GM12878 (cell line): ENCODE measurements at regions of chr12 and their contacts with region 1.

Region 1: GRCh38 chr12:92516277-92516600 is 186.6 kb upstream of the PLEKHG7 start:
- DNase-seq: no peak
- ATAC-seq: peak; percentile 85
- H3K4me3 ChIP-seq: no peak overlapping the region
- H3K27ac ChIP-seq: no peak overlapping the region
- H3K4me1 ChIP-seq: no peaks in the 10 kb centered on the region
- H3K27me3 ChIP-seq: no peaks in the 10 kb centered on the region
- CTCF ChIP-seq: no peak
- EP300 ChIP-seq: no peak
- POLR2A ChIP-seq: no peak
- RAD21 ChIP-seq: no peak

Region 2: DNA sequence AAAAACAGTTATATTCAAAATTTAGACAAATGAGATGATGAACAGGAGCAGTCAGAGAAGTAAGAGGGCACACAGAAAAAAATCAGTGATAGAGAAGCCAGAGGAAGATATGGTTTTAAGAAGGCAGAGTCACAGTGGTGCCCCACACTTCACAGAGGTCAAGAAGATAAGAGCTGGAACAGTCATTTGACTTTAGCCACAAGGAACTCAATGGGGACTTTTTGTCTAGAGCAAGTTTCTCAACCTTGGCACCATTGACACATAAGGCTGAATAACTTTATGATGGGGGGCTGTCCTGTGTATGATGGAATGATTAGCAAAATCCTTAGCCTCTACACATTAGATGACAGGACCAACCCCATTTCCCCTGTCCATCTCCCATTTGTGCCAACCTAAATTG is 13.7 kb after region 1 on chr12:
- CTCF ChIA-PET with region 1: interaction called, 18 read pairs
- POLR2A ChIA-PET with region 1: interaction called, 12 read pairs
- RAD21 ChIA-PET with region 1: interaction called, 4 read pairs
- SMC1A ChIA-PET with region 1: interaction called, 21 read pairs
- in situ Hi-C with region 1: no loop called
- intact Hi-C with region 1: no loop called
- DNase-seq: no peak
- ATAC-seq: peak; percentile 84
- H3K4me3 ChIP-seq: no peak overlapping the region
- H3K27ac ChIP-seq: no peak overlapping the region
- H3K4me1 ChIP-seq: peaks cover 7% of the 10 kb centered on the region; the same call in 1 of the 2 replicates
- H3K27me3 ChIP-seq: no peaks in the 10 kb centered on the region
- CTCF ChIP-seq: no peak
- EP300 ChIP-seq: no peak
- POLR2A ChIP-seq: no peak
- RAD21 ChIP-seq: no peak

Region 3: DNA sequence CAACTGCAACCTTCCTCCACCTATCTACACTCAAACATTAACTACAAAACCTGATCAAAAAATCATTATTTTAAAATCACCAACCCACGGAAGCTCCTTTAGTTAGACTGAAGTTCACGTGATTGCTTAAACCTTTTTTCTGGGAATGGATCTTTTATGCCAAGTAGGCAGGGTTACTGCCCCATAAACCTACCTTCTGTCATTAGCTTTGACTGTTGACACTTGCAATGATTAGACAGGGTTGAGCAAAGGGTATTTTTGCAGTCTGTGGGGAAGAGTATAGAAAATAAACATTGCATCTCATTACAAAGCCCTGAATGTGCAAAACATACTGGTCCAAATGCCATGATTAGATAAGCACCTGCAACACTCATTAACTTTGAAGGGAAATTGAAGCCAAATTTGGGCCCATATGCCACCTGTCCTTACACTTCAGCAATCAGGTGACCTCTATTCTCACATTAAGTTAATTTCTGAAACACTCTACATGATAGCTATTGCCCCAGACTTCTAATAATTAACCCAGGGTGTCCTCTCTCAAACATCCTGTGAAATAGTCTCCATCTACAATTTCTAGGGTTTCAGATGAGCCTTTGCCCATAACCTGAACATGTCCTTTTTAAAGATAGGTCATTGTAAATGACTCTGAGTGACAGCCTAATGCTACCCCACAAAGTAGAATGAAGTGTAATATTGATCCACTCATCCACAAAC is 30.6 kb after region 1 on chr12:
- CTCF ChIA-PET with region 1: interaction called, 7 read pairs
- POLR2A ChIA-PET with region 1: interaction called, 7 read pairs
- RAD21 ChIA-PET with region 1: interaction called, 5 read pairs
- SMC1A ChIA-PET with region 1: interaction called, 14 read pairs
- in situ Hi-C with region 1: no loop called
- intact Hi-C with region 1: no loop called
- DNase-seq: no peak
- ATAC-seq: peak; percentile 60
- H3K4me3 ChIP-seq: no peak overlapping the region
- H3K27ac ChIP-seq: no peak overlapping the region
- H3K4me1 ChIP-seq: peaks cover 43% of the 10 kb centered on the region
- H3K27me3 ChIP-seq: no peaks in the 10 kb centered on the region
- CTCF ChIP-seq: no peak
- EP300 ChIP-seq: peak in 1 of 2 experiments; percentile 52; a peak in 2 of 4 replicates
- POLR2A ChIP-seq: no peak
- RAD21 ChIP-seq: no peak